AG04450 (cell line): ENCODE measurements at regions of chr1 and their contacts with region 1.

Region 1: DNA sequence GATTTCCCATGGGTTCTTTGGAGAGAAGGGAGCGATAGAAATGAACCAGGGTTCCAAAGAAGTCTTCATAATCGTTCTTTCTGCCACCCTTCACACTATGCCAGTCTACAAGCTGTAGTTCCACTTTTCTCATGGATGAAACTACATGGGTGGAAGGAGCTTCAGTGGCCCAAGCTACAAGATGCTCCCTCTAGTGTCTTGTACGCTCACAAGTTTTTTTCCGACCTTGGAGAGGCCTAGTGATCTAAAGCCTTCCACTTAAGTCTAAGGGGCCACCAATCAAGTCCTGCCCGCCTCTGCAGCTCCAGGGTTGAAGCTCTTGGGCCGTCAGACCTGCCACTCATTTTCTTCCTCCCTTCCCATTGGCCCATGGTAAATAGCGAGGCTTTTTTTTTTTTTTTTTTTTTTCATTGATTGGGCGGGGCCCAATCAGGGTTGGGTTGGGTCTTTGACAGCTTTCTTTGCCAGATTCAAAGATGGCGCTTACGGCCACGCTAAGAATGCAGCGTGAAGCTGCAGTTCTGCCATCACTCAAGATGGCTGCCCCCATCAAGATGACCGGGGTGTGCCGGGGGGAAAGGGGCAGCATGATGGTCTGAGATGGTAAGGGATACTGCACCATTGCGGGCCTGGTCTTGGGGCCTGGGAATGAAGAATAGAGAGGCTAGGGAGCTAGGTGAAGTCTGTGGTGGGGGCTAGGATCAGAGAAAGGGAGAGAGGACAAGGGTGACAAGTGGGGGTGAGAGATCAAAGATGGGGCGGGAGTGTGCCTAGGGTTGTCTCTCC is at the start of gene TOMM40L:
- DNase-seq: peak; percentile 100
- H3K4me3 ChIP-seq: peak within 1 kb of the TSS; percentile 97
- H3K27ac ChIP-seq: no peak within 1 kb of the TSS
- H3K27me3 ChIP-seq: no peaks in the 10 kb centered on the region
- CTCF ChIP-seq: peak; percentile 76
- polyA plus RNA-seq, gene TOMM40L: 9.3 and 9.9 TPM in 2 replicates

Region 2: DNA sequence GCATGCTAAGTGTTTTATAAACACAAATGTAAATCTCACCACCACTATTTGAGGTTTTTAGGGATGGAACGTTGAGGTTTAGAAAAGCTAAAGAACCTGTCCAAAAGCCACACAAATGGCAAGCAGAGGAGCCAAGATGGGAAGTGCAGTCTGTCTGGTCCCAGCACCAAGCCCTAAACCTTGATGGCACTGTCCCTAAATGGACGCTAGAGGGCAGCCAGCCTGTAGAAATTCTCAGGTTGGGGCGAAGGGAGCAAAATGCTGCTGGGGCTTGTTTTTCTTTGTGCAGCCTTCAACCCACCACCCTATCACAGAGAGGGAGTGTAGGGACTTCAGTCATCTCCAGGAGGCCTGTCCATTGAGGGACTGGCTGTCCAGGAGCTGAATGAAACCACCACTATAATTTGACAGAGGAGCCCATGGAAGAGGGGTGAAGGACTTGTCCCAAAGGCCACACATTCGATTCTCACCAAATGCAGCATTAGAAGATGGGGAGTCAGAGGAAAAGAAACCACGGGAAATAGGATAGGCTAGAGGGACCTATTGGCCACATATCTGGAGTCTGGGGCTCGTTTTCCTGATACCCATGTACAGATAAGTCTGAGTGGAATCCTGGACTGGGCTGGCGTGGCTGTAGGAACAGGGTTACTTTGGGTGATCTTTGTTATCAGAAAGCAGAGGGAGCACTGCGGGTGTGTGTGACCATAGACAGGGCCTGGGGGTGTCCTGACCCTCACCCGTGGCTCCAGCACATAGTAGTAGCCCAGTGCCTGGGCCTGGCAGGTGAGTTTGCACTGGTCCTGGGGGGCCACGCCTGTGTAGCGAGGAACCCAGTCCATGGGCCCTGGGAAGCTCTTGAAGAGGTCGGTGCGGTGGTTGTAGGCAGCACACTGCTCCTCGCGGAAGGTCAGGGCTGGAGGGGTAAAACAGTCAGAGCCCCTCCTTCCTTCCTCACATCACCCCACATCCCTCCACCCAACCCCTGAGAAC is 33.0 kb before region 1 on chr1:
- CTCF ChIA-PET with region 1: interaction called, 92 read pairs
- POLR2A ChIA-PET with region 1: interaction called, 13 read pairs
- DNase-seq: peak; percentile 37
- H3K4me3 ChIP-seq: no peak overlapping the region
- H3K27ac ChIP-seq: no peak overlapping the region
- H3K27me3 ChIP-seq: no peaks in the 10 kb centered on the region
- CTCF ChIP-seq: peak; percentile 92

Region 3: GRCh38 chr1:161238039-161238473 is 12.3 kb after region 1 on chr1 and contains the start of gene NR1I3:
- CTCF ChIA-PET with region 1: interaction called, 11 read pairs
- POLR2A ChIA-PET with region 1: no interaction called
- DNase-seq: no peak
- H3K4me3 ChIP-seq: no peak within 1 kb of the TSS
- H3K27ac ChIP-seq: no peak within 1 kb of the TSS
- H3K27me3 ChIP-seq: peaks cover 11% of the 10 kb centered on the region
- CTCF ChIP-seq: no peak
- polyA plus RNA-seq, gene NR1I3: not detected in 2 replicates

Region 4: GRCh38 chr1:161305867-161306519 is 80.3 kb after region 1 on chr1:
- CTCF ChIA-PET with region 1: interaction called, 27 read pairs
- POLR2A ChIA-PET with region 1: interaction called, 3 read pairs
- DNase-seq: no peak
- H3K4me3 ChIP-seq: peak overlapping the region; percentile 68
- H3K27ac ChIP-seq: no peak overlapping the region
- H3K27me3 ChIP-seq: peaks cover 10% of the 10 kb centered on the region
- CTCF ChIP-seq: peak; percentile 10; the same call in 1 of the 2 replicates

Region 5: GRCh38 chr1:161374373-161374772 is 148.6 kb after region 1 on chr1:
- CTCF ChIA-PET with region 1: interaction called, 42 read pairs
- POLR2A ChIA-PET with region 1: no interaction called
- DNase-seq: no peak
- H3K4me3 ChIP-seq: no peak overlapping the region
- H3K27ac ChIP-seq: no peak overlapping the region
- H3K27me3 ChIP-seq: no peaks in the 10 kb centered on the region
- CTCF ChIP-seq: peak; percentile 34